ENCODE measurements at regions of chr10 and their contacts with region 1.

Region 1: GRCh38 chr10:101373063-101373462 is 19.1 kb downstream of the BTRC start:
- DNase-seq: no peak
- ATAC-seq: no peak
- H3K4me3 ChIP-seq: no peak overlapping the region
- H3K27ac ChIP-seq: no peak overlapping the region
- H3K4me1 ChIP-seq: peaks cover 0 to 8% (median under 1%) of the 10 kb centered on the region in 9 donors
- H3K27me3 ChIP-seq: no peaks in the 10 kb centered on the region
- CTCF ChIP-seq: no peak

Region 2: GRCh38 chr10:100232101-100232500 is 1141.0 kb before region 1 on chr10:
- intact Hi-C with region 1: no loop called
- DNase-seq: no peak
- ATAC-seq: no peak
- H3K4me3 ChIP-seq: no peak overlapping the region
- H3K27ac ChIP-seq: no peak overlapping the region
- H3K4me1 ChIP-seq: peaks cover 0 to 22% (median 15%) of the 10 kb centered on the region in 9 donors
- H3K27me3 ChIP-seq: no peaks in the 10 kb centered on the region
- CTCF ChIP-seq: no peak

Region 3: GRCh38 chr10:101415884-101416283 is 42.8 kb after region 1 on chr10:
- intact Hi-C with region 1: loop called in 1 of 10 experiments (anchors 5 kb)
- DNase-seq: no peak
- ATAC-seq: no peak
- H3K4me3 ChIP-seq: no peak overlapping the region
- H3K27ac ChIP-seq: no peak overlapping the region
- H3K4me1 ChIP-seq: peaks cover 0 to 8% (median 0%) of the 10 kb centered on the region in 9 donors
- H3K27me3 ChIP-seq: no peaks in the 10 kb centered on the region
- CTCF ChIP-seq: no peak

Region 4: GRCh38 chr10:101506829-101507661 is 134.0 kb after region 1 on chr10:
- intact Hi-C with region 1: no loop called
- DNase-seq: no peak
- ATAC-seq: no peak
- H3K4me3 ChIP-seq: no peak overlapping the region
- H3K27ac ChIP-seq: no peak overlapping the region
- H3K4me1 ChIP-seq: no peaks in the 10 kb centered on the region
- H3K27me3 ChIP-seq: no peaks in the 10 kb centered on the region
- CTCF ChIP-seq: no peak

Measured in heart right ventricle (tissue), 16 donors.